Natural killer cell (primary cell): ENCODE measurements at regions of chr9 and their contacts with region 1.

Region 1: DNA sequence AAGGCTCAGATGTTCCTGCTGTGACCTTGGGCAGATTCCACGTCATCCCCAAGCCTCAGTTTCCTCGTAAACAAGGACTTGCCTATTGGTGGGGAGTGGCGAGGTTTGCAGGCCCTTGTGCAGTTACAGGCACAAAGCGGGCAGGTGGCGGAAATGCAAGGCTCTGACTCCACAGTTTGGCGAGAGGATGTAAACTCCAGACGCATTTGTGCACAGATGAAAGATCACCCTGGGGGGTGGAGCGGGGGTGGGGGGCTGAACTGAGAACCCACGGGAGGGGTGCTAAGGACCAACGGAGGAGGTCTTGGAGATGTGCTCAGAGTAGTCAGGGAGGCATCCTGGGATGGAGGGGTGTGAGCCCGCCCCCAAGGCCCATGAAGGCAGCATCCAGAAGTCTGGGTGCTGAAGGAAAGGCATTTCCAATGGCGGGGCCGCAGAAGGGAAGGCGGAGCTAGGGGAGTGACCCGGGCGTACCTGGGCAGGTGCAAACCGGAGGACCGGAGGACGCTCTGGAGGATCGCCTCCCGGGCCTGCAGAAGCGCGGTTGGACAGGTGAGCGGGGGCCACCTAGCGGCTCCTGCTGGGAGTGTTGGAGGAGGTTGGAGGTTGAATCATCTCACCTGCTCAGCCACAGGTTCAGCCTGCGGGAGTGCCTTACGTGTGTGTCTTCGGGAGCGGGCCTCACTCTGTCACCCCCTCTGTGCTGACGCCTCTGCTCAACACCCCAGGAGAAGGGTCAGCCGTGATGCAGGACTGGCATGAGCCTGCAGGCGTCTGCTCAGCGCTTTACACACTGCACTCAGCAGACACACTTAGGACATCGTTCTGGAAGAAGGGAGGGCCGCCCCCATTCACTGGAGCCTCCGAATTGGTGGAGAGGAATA is 1.9 kb upstream of the FIBCD1 start:
- DNase-seq: peak; percentile 53 to 76
- ATAC-seq: peak; percentile 61 to 90 (median 81)
- H3K4me3 ChIP-seq: no peak overlapping the region
- H3K4me3 Mint-ChIP-seq: no peak overlapping the region
- H3K27ac ChIP-seq: no peak overlapping the region
- H3K27ac Mint-ChIP-seq: no peak overlapping the region
- H3K4me1 ChIP-seq: peaks cover 5% of the 10 kb centered on the region
- H3K4me1 Mint-ChIP-seq: peaks cover 0 to 9% of the 10 kb centered on the region in 2 donors
- H3K27me3 ChIP-seq: peaks cover 12% of the 10 kb centered on the region
- H3K27me3 Mint-ChIP-seq: peaks cover 35 to 37% of the 10 kb centered on the region in 2 donors
- CTCF ChIP-seq: peak; percentile 77

Region 2: GRCh38 chr9:130535818-130536561 is 404.9 kb before region 1 on chr9:
- intact Hi-C with region 1: no loop called
- DNase-seq: no peak
- ATAC-seq: no peak
- H3K4me3 ChIP-seq: no peak overlapping the region
- H3K4me3 Mint-ChIP-seq: no peak overlapping the region
- H3K27ac ChIP-seq: no peak overlapping the region
- H3K27ac Mint-ChIP-seq: no peak overlapping the region
- H3K4me1 ChIP-seq: no peaks in the 10 kb centered on the region
- H3K4me1 Mint-ChIP-seq: peaks cover 0 to 5% of the 10 kb centered on the region in 2 donors
- H3K27me3 ChIP-seq: peaks cover 2% of the 10 kb centered on the region
- H3K27me3 Mint-ChIP-seq: peaks cover 48 to 54% of the 10 kb centered on the region in 2 donors
- CTCF ChIP-seq: no peak

Region 3: DNA sequence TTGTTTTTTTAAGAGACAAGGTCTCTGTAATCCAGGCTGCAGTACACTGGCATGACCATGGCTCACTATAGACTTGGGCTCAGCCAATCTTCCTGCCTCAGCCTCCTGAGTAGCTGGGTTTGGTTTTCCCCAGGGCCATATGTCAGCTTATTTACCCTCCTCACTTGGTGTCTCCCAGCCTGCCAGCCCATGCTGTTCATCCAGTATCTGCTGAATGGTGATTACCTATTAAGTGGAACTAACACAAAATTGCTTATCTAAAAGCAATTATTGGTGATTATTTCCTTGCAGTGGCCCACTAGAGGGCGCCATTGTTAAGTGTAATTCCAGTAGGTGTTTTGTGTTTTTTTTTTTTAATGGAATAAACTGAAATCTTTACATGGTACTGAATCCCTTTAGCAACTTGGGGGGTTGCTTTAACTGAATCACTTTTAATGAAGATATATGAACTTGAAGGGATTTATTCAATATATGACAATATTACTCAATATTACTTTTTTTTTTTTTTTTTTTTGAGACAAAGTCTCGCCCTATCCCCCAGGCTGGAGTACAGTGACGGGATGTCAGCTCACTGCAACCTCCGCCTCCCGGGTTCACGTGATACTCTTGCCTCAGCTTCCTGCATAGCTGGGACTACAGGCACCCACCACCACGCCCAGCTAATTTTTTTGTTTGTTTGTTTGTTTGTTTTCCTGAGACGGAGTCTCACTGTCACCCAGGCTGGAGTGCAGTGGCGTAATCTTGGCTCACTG is 233.5 kb before region 1 on chr9:
- intact Hi-C with region 1: loop called (anchors 1 kb)
- DNase-seq: peak; percentile 58 to 88
- ATAC-seq: peak; percentile 46 to 69 (median 46)
- H3K4me3 ChIP-seq: no peak overlapping the region
- H3K4me3 Mint-ChIP-seq: no peak overlapping the region
- H3K27ac ChIP-seq: no peak overlapping the region
- H3K27ac Mint-ChIP-seq: no peak overlapping the region
- H3K4me1 ChIP-seq: peaks cover 6% of the 10 kb centered on the region
- H3K4me1 Mint-ChIP-seq: peaks cover 7 to 8% of the 10 kb centered on the region in 2 donors
- H3K27me3 ChIP-seq: no peaks in the 10 kb centered on the region
- H3K27me3 Mint-ChIP-seq: no peaks in the 10 kb centered on the region
- CTCF ChIP-seq: peak; percentile 80

Region 4: DNA sequence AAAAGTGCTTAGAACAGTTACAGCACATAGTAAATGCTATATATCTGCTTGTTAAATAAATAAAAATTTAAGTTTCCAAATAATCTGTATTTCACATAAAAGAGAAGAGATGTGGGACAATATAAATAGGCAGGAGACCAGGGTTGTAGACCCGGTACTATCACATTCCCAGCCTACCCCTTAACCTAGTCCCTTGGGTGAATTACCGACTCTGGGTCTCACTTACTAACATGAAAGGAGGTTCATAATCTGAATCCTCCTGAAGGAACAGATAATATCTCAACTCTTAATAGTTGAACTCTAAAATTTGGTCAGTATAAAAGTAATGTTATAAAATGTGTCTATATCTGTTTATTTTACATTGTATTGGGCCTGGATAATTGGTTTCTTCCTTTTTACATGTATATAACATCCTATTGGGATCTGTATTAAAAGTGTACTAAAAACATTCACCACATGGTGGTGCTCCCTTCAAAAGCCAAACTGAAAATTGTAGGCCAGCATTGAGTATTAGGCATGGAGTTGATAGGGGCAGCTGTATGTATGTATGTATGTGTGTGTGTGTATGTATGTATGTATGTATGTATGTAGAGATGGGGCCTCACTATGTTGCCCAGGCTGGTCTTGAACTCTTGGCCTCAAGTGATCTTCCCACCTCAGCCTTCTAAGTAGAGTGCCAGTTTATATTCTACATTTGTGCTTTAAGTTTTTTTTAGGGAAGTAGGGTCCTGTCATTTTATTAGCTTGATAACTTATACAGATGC is 170.1 kb before region 1 on chr9:
- intact Hi-C with region 1: loop called (anchors 5 kb)
- DNase-seq: peak in 1 of 2 donors; percentile 61
- ATAC-seq: peak; percentile 82 to 86 (median 85)
- H3K4me3 ChIP-seq: no peak overlapping the region
- H3K4me3 Mint-ChIP-seq: no peak overlapping the region
- H3K27ac ChIP-seq: no peak overlapping the region
- H3K27ac Mint-ChIP-seq: no peak overlapping the region
- H3K4me1 ChIP-seq: peaks cover 16% of the 10 kb centered on the region
- H3K4me1 Mint-ChIP-seq: peaks cover 30 to 37% of the 10 kb centered on the region in 2 donors
- H3K27me3 ChIP-seq: no peaks in the 10 kb centered on the region
- H3K27me3 Mint-ChIP-seq: no peaks in the 10 kb centered on the region
- CTCF ChIP-seq: peak; percentile 64